ENCODE measurements at regions of chr1 and their contacts with region 1.

Region 1: GRCh38 chr1:227532019-227532619 is 31.2 kb upstream of the ZNF678 start:
- DNase-seq: peak; percentile 57
- H3K4me3 Mint-ChIP-seq: no peak overlapping the region
- H3K27ac Mint-ChIP-seq: no peak overlapping the region
- H3K4me1 Mint-ChIP-seq: no peaks in the 10 kb centered on the region
- H3K27me3 Mint-ChIP-seq: peaks cover 7% of the 10 kb centered on the region
- CTCF ChIP-seq: no peak

Region 2: GRCh38 chr1:227489572-227489971 is 42.5 kb before region 1 on chr1:
- CTCF ChIA-PET with region 1: no interaction called
- POLR2A ChIA-PET with region 1: no interaction called
- intact Hi-C with region 1: no loop called
- DNase-seq: no peak
- H3K4me3 Mint-ChIP-seq: no peak overlapping the region
- H3K27ac Mint-ChIP-seq: no peak overlapping the region
- H3K4me1 Mint-ChIP-seq: no peaks in the 10 kb centered on the region
- H3K27me3 Mint-ChIP-seq: peaks cover 3% of the 10 kb centered on the region
- CTCF ChIP-seq: no peak

Region 3: GRCh38 chr1:227542143-227543120 is 10.3 kb after region 1 on chr1:
- CTCF ChIA-PET with region 1: interaction called, 19 read pairs
- POLR2A ChIA-PET with region 1: interaction called, 4 read pairs
- intact Hi-C with region 1: no loop called
- DNase-seq: peak; percentile 65
- H3K4me3 Mint-ChIP-seq: peak overlapping the region; percentile 39
- H3K27ac Mint-ChIP-seq: no peak overlapping the region
- H3K4me1 Mint-ChIP-seq: no peaks in the 10 kb centered on the region
- H3K27me3 Mint-ChIP-seq: no peaks in the 10 kb centered on the region
- CTCF ChIP-seq: peak; percentile 99

Region 4: GRCh38 chr1:227556288-227556687 is 24.2 kb after region 1 on chr1:
- CTCF ChIA-PET with region 1: no interaction called
- POLR2A ChIA-PET with region 1: no interaction called
- intact Hi-C with region 1: no loop called
- DNase-seq: no peak
- H3K4me3 Mint-ChIP-seq: no peak overlapping the region
- H3K27ac Mint-ChIP-seq: no peak overlapping the region
- H3K4me1 Mint-ChIP-seq: no peaks in the 10 kb centered on the region
- H3K27me3 Mint-ChIP-seq: no peaks in the 10 kb centered on the region
- CTCF ChIP-seq: no peak

Measured in MCF 10A (cell line).